ENCODE measurements at regions of chr1 and their contacts with region 1.

Region 1: GRCh38 chr1:227437495-227438008 is 119.3 kb upstream of the CDC42BPA start:
- DNase-seq: no peak
- ATAC-seq: peak; percentile 78
- H3K4me3 ChIP-seq: peak overlapping the region in 1 of 2 donors; percentile 41
- H3K27ac ChIP-seq: no peak overlapping the region
- H3K4me1 ChIP-seq: no peaks in the 10 kb centered on the region
- H3K27me3 ChIP-seq: no peaks in the 10 kb centered on the region

Region 2: DNA sequence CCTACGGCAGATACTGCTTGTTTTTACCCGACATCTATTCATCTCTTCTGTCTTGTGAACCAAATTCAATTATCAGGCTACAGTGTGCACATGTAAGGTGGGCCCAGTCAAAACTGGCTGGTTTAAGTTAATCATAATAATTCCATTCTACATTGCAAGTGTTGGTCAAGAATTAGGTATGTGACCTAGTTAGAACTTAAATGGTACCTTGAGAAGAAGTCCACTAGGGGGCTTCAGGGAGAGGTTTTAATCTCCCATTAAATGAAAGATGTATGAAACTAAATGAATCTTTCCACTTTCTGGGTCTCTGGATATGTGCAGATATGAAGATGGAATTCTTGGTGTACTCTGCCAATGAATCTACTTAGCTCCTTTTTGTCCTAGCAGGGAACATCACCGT is 306.4 kb before region 1 on chr1:
- intact Hi-C with region 1: loop called (anchors 5 kb)
- DNase-seq: no peak
- ATAC-seq: no peak
- H3K4me3 ChIP-seq: no peak overlapping the region
- H3K27ac ChIP-seq: no peak overlapping the region
- H3K4me1 ChIP-seq: no peaks in the 10 kb centered on the region
- H3K27me3 ChIP-seq: no peaks in the 10 kb centered on the region

Region 3: GRCh38 chr1:227234998-227235405 is 202.6 kb before region 1 on chr1:
- intact Hi-C with region 1: loop called (anchors 5 kb)
- DNase-seq: no peak
- ATAC-seq: no peak
- H3K4me3 ChIP-seq: no peak overlapping the region
- H3K27ac ChIP-seq: no peak overlapping the region
- H3K4me1 ChIP-seq: no peaks in the 10 kb centered on the region
- H3K27me3 ChIP-seq: no peaks in the 10 kb centered on the region

Region 4: GRCh38 chr1:227245613-227246320 is 191.8 kb before region 1 on chr1:
- intact Hi-C with region 1: loop called in 1 of 2 experiments (anchors 5 kb)
- DNase-seq: peak in 1 of 2 donors; percentile 54
- ATAC-seq: peak; percentile 60
- H3K4me3 ChIP-seq: no peak overlapping the region
- H3K27ac ChIP-seq: no peak overlapping the region
- H3K4me1 ChIP-seq: no peaks in the 10 kb centered on the region
- H3K27me3 ChIP-seq: no peaks in the 10 kb centered on the region

Region 5: GRCh38 chr1:227318003-227318852 is 119.3 kb before region 1 on chr1 and contains the start of gene CDC42BPA:
- intact Hi-C with region 1: loop called (anchors 5 to 10 kb)
- DNase-seq: peak; percentile 89 to 93
- ATAC-seq: peak; percentile 92
- H3K4me3 ChIP-seq: peak within 1 kb of the TSS; percentile 97 to 99
- H3K27ac ChIP-seq: peak within 1 kb of the TSS; percentile 64 to 73
- H3K4me1 ChIP-seq: no peaks in the 10 kb centered on the region
- H3K27me3 ChIP-seq: no peaks in the 10 kb centered on the region
- total RNA-seq, gene CDC42BPA: 50.5 to 71.3 TPM

Region 6: DNA sequence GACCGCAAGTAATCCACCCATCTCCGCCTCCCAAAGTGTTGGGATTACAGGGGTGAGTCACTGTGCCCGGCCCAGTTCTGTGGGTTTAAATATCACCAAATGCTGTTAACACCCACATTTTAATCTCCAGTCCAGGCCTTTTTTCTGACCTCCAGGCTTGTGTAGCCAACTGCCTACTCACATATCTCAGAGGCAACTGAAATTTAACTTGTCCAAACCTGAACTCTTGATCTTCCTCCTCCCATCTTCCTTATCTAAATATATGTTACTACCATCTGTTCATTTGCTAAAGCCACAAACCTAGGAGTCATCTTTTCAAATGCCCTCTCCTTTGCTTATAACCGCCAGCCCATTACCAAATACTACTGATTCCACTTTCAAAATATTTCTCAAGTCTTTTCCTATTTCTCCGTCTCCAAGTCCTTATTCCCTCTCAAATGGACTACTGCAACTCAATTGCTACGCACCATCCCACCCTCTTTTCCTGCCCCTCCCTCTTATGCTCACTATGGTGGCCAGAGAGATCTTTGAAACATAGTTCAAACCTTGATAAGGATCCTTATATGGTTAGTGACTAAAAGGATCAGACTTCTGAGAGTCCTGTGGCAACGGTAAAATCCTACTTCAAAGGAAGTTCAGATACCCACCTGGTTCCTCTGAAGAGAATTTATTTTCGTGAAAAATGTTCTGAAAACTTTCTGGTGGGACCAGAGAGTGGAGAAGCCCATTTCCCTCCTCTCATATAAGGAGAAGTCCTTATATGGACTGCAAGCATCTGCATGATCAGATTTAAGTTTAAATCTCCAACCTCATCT is 40.8 kb before region 1 on chr1:
- intact Hi-C with region 1: no loop called
- DNase-seq: no peak
- ATAC-seq: no peak
- H3K4me3 ChIP-seq: no peak overlapping the region
- H3K27ac ChIP-seq: no peak overlapping the region
- H3K4me1 ChIP-seq: no peaks in the 10 kb centered on the region
- H3K27me3 ChIP-seq: no peaks in the 10 kb centered on the region